B cell (primary cell): ENCODE measurements at regions of chr11 and their contacts with region 1.

Region 1: GRCh38 chr11:96215110-96215782 is 127.7 kb downstream of the MAML2 start:
- DNase-seq: peak; percentile 83
- ATAC-seq: peak; percentile 86
- H3K4me3 ChIP-seq: peak overlapping the region in 3 of 5 experiments; percentile 15 to 37 (median 16)
- H3K4me3 Mint-ChIP-seq: peak overlapping the region; percentile 77
- H3K27ac ChIP-seq: peak overlapping the region; percentile 72 to 84
- H3K27ac Mint-ChIP-seq: peak overlapping the region; percentile 98
- H3K4me1 ChIP-seq: peaks cover 78 to 84% of the 10 kb centered on the region in 2 donors
- H3K4me1 Mint-ChIP-seq: peaks cover 80% of the 10 kb centered on the region
- H3K27me3 ChIP-seq: no peaks in the 10 kb centered on the region
- H3K27me3 Mint-ChIP-seq: no peaks in the 10 kb centered on the region
- CTCF ChIP-seq: no peak

Region 2: GRCh38 chr11:96001037-96001436 is 214.2 kb before region 1 on chr11:
- CTCF ChIA-PET with region 1: no interaction called
- POLR2A ChIA-PET with region 1: no interaction called
- intact Hi-C with region 1: no loop called
- DNase-seq: no peak
- ATAC-seq: no peak
- H3K4me3 ChIP-seq: no peak overlapping the region
- H3K4me3 Mint-ChIP-seq: no peak overlapping the region
- H3K27ac ChIP-seq: no peak overlapping the region
- H3K27ac Mint-ChIP-seq: no peak overlapping the region
- H3K4me1 ChIP-seq: no peaks in the 10 kb centered on the region
- H3K4me1 Mint-ChIP-seq: no peaks in the 10 kb centered on the region
- H3K27me3 ChIP-seq: no peaks in the 10 kb centered on the region
- H3K27me3 Mint-ChIP-seq: no peaks in the 10 kb centered on the region
- CTCF ChIP-seq: no peak

Region 3: DNA sequence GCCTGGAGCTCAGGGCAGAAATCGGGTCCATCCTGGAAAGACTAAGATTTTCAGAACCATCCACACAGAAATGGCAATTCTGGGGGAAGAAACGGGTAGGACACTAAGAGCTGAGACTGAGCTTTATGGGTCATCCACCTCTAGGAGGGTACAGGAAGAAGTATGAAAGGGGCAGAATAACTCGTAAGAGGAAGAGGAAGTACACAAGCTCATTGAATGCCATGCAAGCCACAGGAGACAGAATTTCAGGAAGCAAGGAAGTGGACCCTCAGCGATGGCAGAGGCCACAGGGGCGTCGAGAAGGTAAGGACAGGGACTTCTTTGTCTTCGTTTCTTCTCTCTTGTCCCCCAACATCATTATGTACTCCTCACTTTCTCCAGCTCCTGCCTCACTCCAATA is 41.8 kb before region 1 on chr11:
- CTCF ChIA-PET with region 1: no interaction called
- POLR2A ChIA-PET with region 1: no interaction called
- intact Hi-C with region 1: no loop called
- DNase-seq: no peak
- ATAC-seq: no peak
- H3K4me3 ChIP-seq: no peak overlapping the region
- H3K4me3 Mint-ChIP-seq: no peak overlapping the region
- H3K27ac ChIP-seq: no peak overlapping the region
- H3K27ac Mint-ChIP-seq: peak overlapping the region; percentile 34
- H3K4me1 ChIP-seq: peaks cover 10 to 14% of the 10 kb centered on the region in 2 donors
- H3K4me1 Mint-ChIP-seq: peaks cover 17% of the 10 kb centered on the region
- H3K27me3 ChIP-seq: no peaks in the 10 kb centered on the region
- H3K27me3 Mint-ChIP-seq: no peaks in the 10 kb centered on the region
- CTCF ChIP-seq: no peak

Region 4: GRCh38 chr11:96188243-96189006 is 26.8 kb before region 1 on chr11:
- CTCF ChIA-PET with region 1: no interaction called
- POLR2A ChIA-PET with region 1: interaction called, 4 read pairs
- intact Hi-C with region 1: loop called (anchors 5 kb)
- DNase-seq: peak; percentile 20
- ATAC-seq: peak; percentile 45
- H3K4me3 ChIP-seq: no peak overlapping the region
- H3K4me3 Mint-ChIP-seq: peak overlapping the region; percentile 57
- H3K27ac ChIP-seq: peak overlapping the region in 1 of 2 donors; percentile 68
- H3K27ac Mint-ChIP-seq: peak overlapping the region; percentile 54
- H3K4me1 ChIP-seq: peaks cover 42 to 56% of the 10 kb centered on the region in 2 donors
- H3K4me1 Mint-ChIP-seq: peaks cover 72% of the 10 kb centered on the region
- H3K27me3 ChIP-seq: no peaks in the 10 kb centered on the region
- H3K27me3 Mint-ChIP-seq: no peaks in the 10 kb centered on the region
- CTCF ChIP-seq: no peak

Region 5: DNA sequence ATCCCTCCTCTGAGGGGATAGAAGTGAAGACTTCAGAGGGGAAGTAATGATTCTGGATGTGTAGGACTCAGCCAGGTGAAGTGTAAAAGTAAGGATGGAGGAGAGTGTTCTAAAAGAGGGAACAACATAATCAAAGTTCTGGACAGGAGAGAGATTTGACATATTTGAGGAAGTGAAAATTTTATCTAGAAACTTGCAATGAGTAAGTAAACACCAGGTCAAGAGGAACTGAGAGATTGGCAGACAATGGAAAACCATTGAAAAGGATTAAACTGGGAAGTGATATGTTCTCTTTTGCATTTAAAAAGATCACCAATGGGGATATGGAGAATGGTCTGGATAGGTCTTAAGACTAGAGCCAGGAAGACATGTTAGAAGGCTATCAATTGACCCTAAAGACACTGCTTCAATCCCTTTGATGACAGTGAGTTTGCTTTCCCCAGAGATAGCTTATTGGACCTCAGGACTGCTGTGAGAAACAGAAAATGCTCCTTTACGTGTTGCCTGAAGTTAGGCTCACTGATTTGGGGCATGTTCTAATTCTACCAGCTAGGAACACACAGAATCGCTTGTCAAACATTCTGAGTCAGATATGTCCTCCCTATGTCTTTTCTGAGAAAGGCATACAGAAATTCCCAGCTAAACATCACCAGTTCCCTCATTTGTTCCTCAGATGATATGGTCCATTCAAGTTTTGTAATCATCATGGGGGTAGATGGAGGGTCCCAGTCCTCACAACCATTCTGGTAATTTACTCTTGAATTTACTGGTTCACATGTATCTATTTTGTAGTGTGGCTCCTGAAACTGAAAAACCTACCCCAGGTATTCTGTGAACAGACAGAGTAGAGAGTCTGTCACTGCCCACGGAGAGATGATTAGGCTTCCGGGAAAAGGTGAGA is 17.2 kb before region 1 on chr11:
- CTCF ChIA-PET with region 1: interaction called, 5 read pairs
- POLR2A ChIA-PET with region 1: interaction called, 10 read pairs
- intact Hi-C with region 1: loop called (anchors 1 kb)
- DNase-seq: peak; percentile 62
- ATAC-seq: peak; percentile 83
- H3K4me3 ChIP-seq: peak overlapping the region in 1 of 5 experiments; percentile 38
- H3K4me3 Mint-ChIP-seq: peak overlapping the region; percentile 46
- H3K27ac ChIP-seq: peak overlapping the region; percentile 55 to 71
- H3K27ac Mint-ChIP-seq: peak overlapping the region; percentile 90
- H3K4me1 ChIP-seq: peaks cover 38 to 50% of the 10 kb centered on the region in 2 donors
- H3K4me1 Mint-ChIP-seq: peaks cover 74% of the 10 kb centered on the region
- H3K27me3 ChIP-seq: no peaks in the 10 kb centered on the region
- H3K27me3 Mint-ChIP-seq: no peaks in the 10 kb centered on the region
- CTCF ChIP-seq: no peak

Region 6: DNA sequence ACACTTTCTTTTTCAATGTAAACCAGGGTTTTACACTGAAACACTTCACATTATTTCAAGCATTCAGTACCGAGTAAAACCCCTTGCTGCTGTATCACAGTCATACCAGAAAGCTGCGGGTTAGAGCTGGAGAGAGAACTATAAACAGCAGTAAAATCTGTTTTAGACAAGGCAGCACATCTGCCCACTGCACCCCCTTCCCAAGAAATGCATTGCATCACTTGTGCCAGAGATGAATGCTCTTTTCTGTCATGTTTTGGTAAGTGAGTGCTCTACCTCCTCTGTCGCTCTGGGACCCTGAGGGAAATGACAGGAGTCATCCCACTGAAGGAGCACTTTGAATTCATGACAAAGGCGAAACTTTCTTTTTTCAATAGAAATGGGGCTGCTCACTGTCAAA is 20.5 kb after region 1 on chr11:
- CTCF ChIA-PET with region 1: interaction called, 16 read pairs
- POLR2A ChIA-PET with region 1: interaction called, 3 read pairs
- intact Hi-C with region 1: loop called (anchors 2 kb)
- DNase-seq: no peak
- ATAC-seq: no peak
- H3K4me3 ChIP-seq: no peak overlapping the region
- H3K4me3 Mint-ChIP-seq: no peak overlapping the region
- H3K27ac ChIP-seq: no peak overlapping the region
- H3K27ac Mint-ChIP-seq: no peak overlapping the region
- H3K4me1 ChIP-seq: peaks cover 10 to 14% of the 10 kb centered on the region in 2 donors
- H3K4me1 Mint-ChIP-seq: peaks cover 22% of the 10 kb centered on the region
- H3K27me3 ChIP-seq: no peaks in the 10 kb centered on the region
- H3K27me3 Mint-ChIP-seq: no peaks in the 10 kb centered on the region
- CTCF ChIP-seq: no peak

Region 7: DNA sequence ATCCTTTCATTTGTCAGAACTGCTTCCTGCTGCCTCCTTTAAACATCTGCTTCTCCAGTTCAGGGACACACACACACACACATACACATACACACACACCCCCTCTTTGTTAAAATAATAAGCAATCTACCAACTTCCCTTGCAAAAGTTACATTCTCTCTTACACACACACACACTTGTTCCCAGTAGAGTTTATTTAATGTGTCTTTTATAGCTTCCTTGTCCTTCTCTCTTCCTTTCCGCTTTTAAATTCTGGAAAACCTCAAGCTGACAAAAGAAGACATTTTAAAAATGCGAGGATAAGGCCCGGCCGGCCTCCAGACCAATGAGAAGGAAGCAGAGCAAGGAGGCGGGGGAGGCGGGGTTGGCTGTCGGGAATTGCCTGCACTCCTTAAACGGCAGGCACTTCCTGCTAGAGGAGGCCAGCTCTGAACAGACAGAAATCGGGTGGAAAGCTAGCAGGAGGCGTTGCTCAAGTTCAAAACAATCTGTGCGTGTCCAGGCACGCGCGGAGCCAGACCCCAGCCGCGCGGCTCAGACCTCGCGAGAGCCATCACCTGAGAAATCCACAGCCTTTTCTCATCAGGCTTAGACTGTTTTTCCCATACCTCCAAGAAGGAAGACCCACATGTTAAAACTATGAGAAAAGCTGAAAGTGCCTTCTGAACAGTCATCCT is 27.9 kb after region 1 on chr11:
- CTCF ChIA-PET with region 1: interaction called, 16 read pairs
- POLR2A ChIA-PET with region 1: no interaction called
- intact Hi-C with region 1: loop called (anchors 2 kb)
- DNase-seq: peak; percentile 82
- ATAC-seq: peak; percentile 81
- H3K4me3 ChIP-seq: peak overlapping the region; percentile 50 to 77 (median 62)
- H3K4me3 Mint-ChIP-seq: peak overlapping the region; percentile 93
- H3K27ac ChIP-seq: peak overlapping the region; percentile 72 to 84
- H3K27ac Mint-ChIP-seq: peak overlapping the region; percentile 96
- H3K4me1 ChIP-seq: peaks cover 36 to 37% of the 10 kb centered on the region in 2 donors
- H3K4me1 Mint-ChIP-seq: peaks cover 49% of the 10 kb centered on the region
- H3K27me3 ChIP-seq: no peaks in the 10 kb centered on the region
- H3K27me3 Mint-ChIP-seq: no peaks in the 10 kb centered on the region
- CTCF ChIP-seq: no peak

Region 8: DNA sequence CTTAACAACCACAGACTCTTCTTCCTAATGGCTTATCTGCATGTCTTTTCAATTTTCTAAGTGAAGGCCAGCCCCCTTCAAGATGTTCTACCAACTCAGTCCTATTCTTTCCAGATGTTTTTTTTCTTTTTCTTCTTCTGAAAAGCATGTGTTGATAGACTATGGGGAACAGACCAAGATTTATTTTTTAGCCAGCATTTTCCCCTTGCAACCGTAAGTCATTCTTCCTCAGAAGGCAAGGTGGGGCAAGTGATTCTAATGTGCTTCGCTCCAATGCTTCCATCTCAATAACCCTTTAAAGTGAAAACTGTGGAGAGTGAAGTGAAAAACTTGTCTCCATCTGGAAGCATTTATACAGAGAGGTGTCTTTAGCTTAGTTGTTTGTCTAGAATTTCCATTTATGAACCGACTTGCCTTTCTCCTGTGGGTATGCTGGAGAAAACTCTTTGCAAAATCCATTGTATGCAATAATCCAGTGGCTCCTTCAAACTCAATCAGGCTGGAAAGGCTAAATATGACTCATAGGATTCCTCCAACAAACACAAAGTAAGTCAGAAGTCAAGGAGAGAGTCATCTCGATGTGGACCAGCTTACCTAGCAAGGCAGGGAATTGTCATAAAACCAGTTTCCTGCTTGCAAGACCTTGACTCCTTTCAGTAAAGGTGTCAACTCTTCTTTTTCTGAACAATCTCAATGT is 44.0 kb after region 1 on chr11:
- CTCF ChIA-PET with region 1: interaction called, 4 read pairs
- POLR2A ChIA-PET with region 1: interaction called, 3 read pairs
- intact Hi-C with region 1: loop called (anchors 1 kb)
- DNase-seq: peak; percentile 53
- ATAC-seq: peak; percentile 28
- H3K4me3 ChIP-seq: peak overlapping the region in 4 of 5 experiments; percentile 0 to 55 (median 20)
- H3K4me3 Mint-ChIP-seq: peak overlapping the region; percentile 79
- H3K27ac ChIP-seq: peak overlapping the region; percentile 95 to 99
- H3K27ac Mint-ChIP-seq: peak overlapping the region; percentile 97
- H3K4me1 ChIP-seq: peaks cover 65 to 68% of the 10 kb centered on the region in 2 donors
- H3K4me1 Mint-ChIP-seq: peaks cover 72% of the 10 kb centered on the region
- H3K27me3 ChIP-seq: no peaks in the 10 kb centered on the region
- H3K27me3 Mint-ChIP-seq: no peaks in the 10 kb centered on the region
- CTCF ChIP-seq: no peak